Common myeloid progenitor, CD34-positive (primary cell): ENCODE measurements at regions of chr2 and their contacts with region 1.

Region 1: GRCh38 chr2:68196120-68196716 is 38.5 kb downstream of the PNO1 start:
- DNase-seq: peak; percentile 70 to 79 (median 75)
- H3K4me3 ChIP-seq: no peak overlapping the region
- H3K27ac ChIP-seq: no peak overlapping the region
- H3K4me1 ChIP-seq: peaks cover 3 to 15% (median 9%) of the 10 kb centered on the region in 4 experiments
- H3K27me3 ChIP-seq: no peaks in the 10 kb centered on the region

Region 2: DNA sequence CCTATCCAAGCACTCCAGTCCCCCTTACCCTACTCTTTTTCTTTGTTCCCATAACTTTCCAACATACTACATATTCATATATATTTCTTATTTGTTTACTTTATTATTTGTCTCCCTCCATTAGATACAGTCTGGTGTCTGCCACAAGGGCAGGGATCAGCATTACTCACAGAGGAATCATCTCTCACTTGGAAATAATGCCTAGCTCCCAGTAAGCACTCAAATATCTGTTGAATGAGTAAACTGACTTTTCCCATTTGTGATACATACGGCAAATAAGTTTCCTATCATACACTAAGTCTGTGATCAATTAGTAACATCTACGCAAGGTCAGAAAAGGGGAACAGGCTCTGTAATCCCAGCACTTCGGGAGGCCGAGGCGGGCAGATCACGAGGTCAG is 152.1 kb before region 1 on chr2:
- CTCF ChIA-PET with region 1: no interaction called
- POLR2A ChIA-PET with region 1: no interaction called
- DNase-seq: no peak
- H3K4me3 ChIP-seq: no peak overlapping the region
- H3K27ac ChIP-seq: no peak overlapping the region
- H3K4me1 ChIP-seq: no peaks in the 10 kb centered on the region
- H3K27me3 ChIP-seq: no peaks in the 10 kb centered on the region

Region 3: GRCh38 chr2:68185541-68186164 is 10.6 kb before region 1 on chr2:
- CTCF ChIA-PET with region 1: interaction called, 22 read pairs
- POLR2A ChIA-PET with region 1: no interaction called
- DNase-seq: peak; percentile 75 to 84 (median 79)
- H3K4me3 ChIP-seq: no peak overlapping the region
- H3K27ac ChIP-seq: no peak overlapping the region
- H3K4me1 ChIP-seq: peaks cover 0 to 6% (median 2%) of the 10 kb centered on the region in 4 experiments
- H3K27me3 ChIP-seq: no peaks in the 10 kb centered on the region

Region 4: DNA sequence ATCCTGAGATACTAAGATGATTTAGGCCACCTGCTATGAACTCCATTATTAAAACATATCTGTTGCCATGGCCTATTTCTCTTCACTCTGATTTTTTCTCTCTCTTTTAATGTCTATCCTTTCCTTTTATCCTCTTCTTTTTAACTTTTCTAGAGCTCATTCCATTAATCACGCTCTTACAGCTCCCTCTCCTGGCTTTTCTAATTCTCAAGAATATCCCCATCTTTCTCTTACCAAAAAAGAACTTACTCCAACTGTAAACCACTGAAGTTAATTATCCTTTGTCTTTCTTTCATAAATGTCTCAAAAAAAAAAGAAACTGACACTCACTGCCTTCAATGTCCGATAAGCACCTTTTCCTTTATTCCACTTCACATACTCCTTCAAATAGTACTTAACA is 48.2 kb after region 1 on chr2:
- CTCF ChIA-PET with region 1: interaction called, 30 read pairs
- POLR2A ChIA-PET with region 1: no interaction called
- DNase-seq: no peak
- H3K4me3 ChIP-seq: no peak overlapping the region
- H3K27ac ChIP-seq: peak overlapping the region in 1 of 2 experiments; percentile 32
- H3K4me1 ChIP-seq: peaks cover 25 to 53% (median 39%) of the 10 kb centered on the region in 4 experiments
- H3K27me3 ChIP-seq: no peaks in the 10 kb centered on the region

Region 5: GRCh38 chr2:68272246-68272994 is 76.2 kb after region 1 on chr2:
- CTCF ChIA-PET with region 1: interaction called, 18 read pairs
- POLR2A ChIA-PET with region 1: no interaction called
- DNase-seq: peak; percentile 79 to 96 (median 92)
- H3K4me3 ChIP-seq: peak overlapping the region in 2 of 7 experiments; percentile 37 to 46
- H3K27ac ChIP-seq: peak overlapping the region; percentile 82 to 95
- H3K4me1 ChIP-seq: peaks cover 10 to 23% (median 13%) of the 10 kb centered on the region in 4 experiments
- H3K27me3 ChIP-seq: no peaks in the 10 kb centered on the region

Region 6: DNA sequence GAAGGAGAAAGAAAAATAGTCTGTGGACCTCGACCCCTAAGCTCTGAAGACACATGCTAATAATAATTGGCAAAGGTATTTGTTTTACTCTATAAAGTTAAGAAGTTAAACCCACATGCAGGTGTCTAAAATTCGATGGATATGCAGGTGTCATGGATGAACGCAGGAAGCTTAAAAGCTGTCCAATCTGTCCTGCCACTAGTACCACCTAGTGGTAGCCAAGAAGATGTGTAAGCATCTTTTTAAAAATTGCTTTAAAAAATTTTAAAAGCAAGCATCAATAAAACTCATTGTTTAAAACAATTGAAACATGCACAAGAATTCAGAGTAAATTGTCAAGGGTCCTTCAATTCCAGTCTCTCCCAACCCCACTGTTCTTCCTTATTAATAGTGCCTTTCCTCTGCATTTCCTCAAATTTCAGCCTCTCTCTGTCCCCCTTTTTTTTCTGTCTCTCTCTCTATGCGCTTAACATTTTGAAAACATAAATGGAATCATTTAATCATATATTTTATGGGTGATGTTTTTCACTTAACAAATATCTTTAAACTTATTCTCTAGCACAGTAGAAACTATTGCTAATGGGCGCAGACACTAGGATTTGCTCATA is 86.7 kb after region 1 on chr2:
- CTCF ChIA-PET with region 1: interaction called, 63 read pairs
- POLR2A ChIA-PET with region 1: interaction called, 3 read pairs
- DNase-seq: peak; percentile 38 to 65 (median 55)
- H3K4me3 ChIP-seq: no peak overlapping the region
- H3K27ac ChIP-seq: no peak overlapping the region
- H3K4me1 ChIP-seq: peaks cover 0 to 12% (median 5%) of the 10 kb centered on the region in 4 experiments
- H3K27me3 ChIP-seq: no peaks in the 10 kb centered on the region

Region 7: DNA sequence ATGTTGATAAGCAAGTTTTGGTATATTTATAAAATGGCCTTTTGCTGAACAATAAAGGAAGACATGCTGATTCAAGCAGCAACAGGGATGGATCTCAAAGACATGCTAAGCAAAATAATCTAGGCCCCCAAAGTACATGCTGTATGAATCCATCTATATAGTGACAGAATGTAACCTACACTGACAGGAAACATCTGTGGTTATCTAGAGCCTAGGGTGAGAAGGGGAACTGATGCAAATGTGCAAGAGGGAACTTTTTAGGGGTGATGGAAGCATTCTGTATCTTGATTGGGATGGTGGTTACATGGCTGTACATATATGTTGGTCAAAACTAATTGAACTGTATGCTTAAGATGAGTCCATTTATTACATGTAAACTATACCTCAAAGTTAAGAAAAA is 99.3 kb after region 1 on chr2:
- CTCF ChIA-PET with region 1: interaction called, 35 read pairs
- POLR2A ChIA-PET with region 1: no interaction called
- DNase-seq: peak; percentile 63 to 92 (median 86)
- H3K4me3 ChIP-seq: no peak overlapping the region
- H3K27ac ChIP-seq: no peak overlapping the region
- H3K4me1 ChIP-seq: peaks cover 9 to 30% (median 24%) of the 10 kb centered on the region in 4 experiments
- H3K27me3 ChIP-seq: no peaks in the 10 kb centered on the region